PC-9 (cell line): ENCODE measurements at regions of chr5 and their contacts with region 1.

Region 1: DNA sequence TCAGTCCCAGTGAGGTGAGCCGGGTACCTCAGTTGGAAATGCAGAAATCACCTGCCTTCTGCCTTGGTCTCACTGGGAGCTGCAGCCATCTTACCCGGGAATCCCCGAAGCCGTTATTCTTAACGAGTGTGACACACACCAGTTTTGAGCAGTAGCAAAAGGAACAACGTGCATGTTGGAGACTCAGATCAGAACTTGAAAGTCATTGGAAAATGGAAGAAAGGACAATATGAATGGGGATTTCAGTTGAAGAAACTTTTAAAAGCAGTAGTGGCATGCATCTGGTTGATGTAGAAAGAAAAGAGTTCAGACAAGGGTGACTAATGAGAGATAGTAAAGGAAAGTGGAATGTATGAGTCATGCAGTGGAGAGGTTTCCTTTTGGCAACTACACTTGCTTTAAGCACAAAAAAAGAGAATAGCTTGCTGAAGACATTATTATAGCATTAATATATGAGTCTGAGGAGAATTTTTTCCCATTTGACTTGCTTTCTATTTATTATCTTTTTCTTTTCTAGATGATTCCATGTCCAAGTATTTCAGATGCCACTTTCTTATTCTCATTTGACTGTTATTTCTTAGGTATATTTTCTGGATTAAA is 44.4 kb upstream of the ANKDD1B start:
- DNase-seq: peak; percentile 22 to 78
- H3K4me3 ChIP-seq: peak overlapping the region; percentile 16; the same call in 1 of the 2 replicates
- H3K27ac ChIP-seq: peak overlapping the region; percentile 24; the same call in 1 of the 2 replicates
- H3K4me1 ChIP-seq: peaks cover 21% of the 10 kb centered on the region
- H3K27me3 ChIP-seq: no peaks in the 10 kb centered on the region
- CTCF ChIP-seq: no peak

Region 2: DNA sequence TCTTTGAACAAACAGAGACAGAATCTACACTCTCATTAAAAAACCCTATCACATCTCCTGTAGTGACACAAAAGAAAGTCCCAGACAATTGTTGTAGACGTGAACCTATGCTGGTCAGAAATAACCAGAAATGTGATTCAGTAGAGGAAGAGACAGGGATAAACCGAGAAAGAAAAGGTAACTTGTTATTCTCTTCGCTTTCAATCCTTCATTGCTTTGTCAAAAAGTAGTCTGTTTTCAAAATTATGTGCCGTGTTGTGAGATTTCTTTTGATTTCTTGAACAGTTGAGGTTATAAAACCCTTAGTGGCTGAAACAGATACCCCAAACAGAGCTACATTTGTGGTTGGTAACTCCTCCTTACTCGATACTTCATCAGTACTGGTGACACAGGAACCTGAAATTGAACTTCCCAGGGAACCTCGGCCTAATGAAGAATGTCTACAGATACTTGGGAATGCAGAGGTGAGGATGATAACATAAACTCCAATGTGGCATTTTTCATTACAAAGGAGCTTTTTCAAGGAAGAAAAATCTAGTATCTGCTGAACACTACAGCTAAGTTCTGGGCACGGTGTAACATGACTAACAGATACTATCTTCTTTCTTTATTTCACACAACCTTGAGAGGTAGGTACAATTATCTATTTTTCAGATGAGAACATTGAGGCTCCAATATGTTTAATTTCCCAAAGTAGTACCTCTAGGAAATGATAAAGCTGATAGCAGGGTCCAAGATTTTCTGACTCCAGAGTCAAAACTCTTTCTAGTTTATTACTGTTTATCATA is 215.5 kb before region 1 on chr5:
- CTCF ChIA-PET with region 1: no interaction called
- POLR2A ChIA-PET with region 1: no interaction called
- intact Hi-C with region 1: loop called (anchors 10 kb)
- DNase-seq: no peak
- H3K4me3 ChIP-seq: no peak overlapping the region
- H3K27ac ChIP-seq: no peak overlapping the region
- H3K4me1 ChIP-seq: no peaks in the 10 kb centered on the region
- H3K27me3 ChIP-seq: no peaks in the 10 kb centered on the region
- CTCF ChIP-seq: no peak

Region 3: GRCh38 chr5:75632321-75632720 is 65.5 kb after region 1 on chr5:
- CTCF ChIA-PET with region 1: no interaction called
- POLR2A ChIA-PET with region 1: no interaction called
- intact Hi-C with region 1: no loop called
- DNase-seq: no peak
- H3K4me3 ChIP-seq: no peak overlapping the region
- H3K27ac ChIP-seq: no peak overlapping the region
- H3K4me1 ChIP-seq: no peaks in the 10 kb centered on the region
- H3K27me3 ChIP-seq: no peaks in the 10 kb centered on the region
- CTCF ChIP-seq: no peak